Posterior cingulate gyrus (tissue), 11 donors: ENCODE measurements at regions of chr2 and their contacts with region 1.

Region 1: GRCh38 chr2:169109502-169110409 is 40.4 kb downstream of the DHRS9 start:
- DNase-seq: peak; percentile 47 to 97 (median 82)

Region 2: DNA sequence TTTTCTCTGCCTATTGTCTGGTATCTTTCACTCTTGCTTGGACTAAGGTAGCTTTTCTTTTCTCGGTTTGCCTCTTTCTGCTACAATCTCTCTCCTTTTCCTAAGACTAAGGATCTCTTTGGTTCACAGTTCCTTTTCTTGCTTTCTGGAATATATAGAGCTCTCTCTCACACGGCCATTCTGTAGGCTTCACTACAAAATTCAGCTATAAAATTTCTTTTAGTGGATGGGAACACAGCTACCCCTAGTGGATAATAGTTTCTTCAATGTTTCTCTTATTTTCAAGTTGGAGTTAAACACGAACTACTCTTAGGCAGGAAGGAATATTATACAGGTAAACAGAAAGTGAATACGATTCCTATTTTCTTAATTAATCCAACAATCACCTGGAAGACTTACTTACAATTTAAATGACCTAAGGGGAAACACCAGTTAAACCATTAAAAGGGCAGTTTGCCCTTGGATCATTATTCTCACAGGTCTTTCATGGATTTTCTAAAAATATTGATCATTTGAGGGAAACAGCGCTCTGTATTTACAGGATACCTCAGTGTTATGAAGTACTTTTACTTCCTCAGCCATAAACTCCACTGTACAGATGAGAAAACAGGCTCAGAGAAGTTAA is 112.1 kb after region 1 on chr2:
- intact Hi-C with region 1: loop called (anchors 1 kb)
- DNase-seq: no peak

Region 3: GRCh38 chr2:169397697-169398096 is 287.9 kb after region 1 on chr2:
- intact Hi-C with region 1: loop called (anchors 5 kb)
- DNase-seq: peak in 1 of 10 donors; percentile 19